A549 (cell line): ENCODE measurements at regions of chr1 and their contacts with region 1.

Region 1: DNA sequence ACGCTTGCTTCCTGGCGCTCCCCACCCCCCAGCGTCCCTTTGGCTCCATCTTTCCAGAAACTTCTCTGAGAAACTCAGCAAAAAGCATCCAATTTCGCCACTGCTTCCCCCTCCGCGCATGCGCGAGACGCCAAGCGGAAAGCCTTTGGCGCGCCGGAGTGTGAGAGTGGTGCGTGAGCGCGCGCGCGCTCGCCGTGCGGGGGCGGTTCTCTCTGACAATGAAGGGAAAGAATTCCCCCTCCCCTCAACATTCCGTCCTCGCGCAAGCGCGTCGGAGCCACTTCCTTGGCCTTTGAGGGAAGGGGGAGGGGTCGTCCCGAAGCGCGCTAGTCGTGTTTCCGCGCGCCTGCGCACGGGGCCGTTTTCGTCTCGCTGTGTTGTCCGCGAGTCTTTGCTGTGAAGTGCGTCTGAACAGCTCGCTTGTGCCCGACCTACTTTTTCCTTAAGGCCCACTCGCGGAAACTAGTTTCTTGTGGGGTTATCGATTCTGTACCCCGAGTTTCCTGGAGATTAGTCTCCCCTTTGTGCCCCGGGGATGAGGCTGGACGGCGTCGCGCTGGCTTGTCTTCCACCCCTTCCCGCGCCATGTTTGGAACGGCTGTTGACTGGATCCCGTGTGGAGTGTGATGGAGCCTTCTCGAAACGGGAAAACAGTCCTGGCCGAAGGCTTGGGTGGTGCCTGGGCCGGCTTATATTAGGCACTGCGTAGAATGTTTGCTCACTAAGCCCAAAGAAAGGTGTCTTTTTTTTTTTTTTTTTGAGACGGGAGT is 11.6 kb upstream of the SPEN start:
- DNase-seq: peak; percentile 74 to 98
- ATAC-seq: peak; percentile 67 to 75
- H3K4me3 ChIP-seq: peak overlapping the region; percentile 77
- H3K27ac ChIP-seq: peak overlapping the region; percentile 98 to 100
- H3K4me1 ChIP-seq: peaks cover 20% of the 10 kb centered on the region
- CTCF ChIP-seq: no peak
- EP300 ChIP-seq: no peak
- POLR2A ChIP-seq: peak; percentile 69
- RAD21 ChIP-seq: no peak

Region 2: DNA sequence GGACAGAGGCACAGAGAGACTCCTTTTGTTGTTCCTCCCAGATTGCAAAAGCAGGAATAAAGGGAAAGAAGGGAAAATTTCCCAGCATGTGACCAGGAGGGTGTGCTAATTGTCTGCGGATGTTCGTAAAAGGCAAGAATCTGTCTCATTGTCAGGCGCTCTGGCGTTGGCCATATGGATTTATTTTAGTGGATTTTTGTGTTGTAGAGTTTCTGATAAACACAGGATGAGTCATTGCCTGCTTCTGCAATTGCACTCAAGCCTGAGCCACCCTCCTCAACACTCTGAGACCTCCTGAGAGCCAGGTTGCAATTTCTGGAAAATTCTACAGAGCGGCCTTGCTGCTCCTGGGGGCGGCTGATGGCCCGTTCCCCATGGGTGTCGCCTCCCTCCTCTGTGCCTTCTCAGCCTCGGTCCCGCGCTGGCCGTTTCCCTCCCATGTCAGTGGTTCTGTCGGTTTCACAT is 1009.7 kb before region 1 on chr1:
- CTCF ChIA-PET with region 1: no interaction called
- POLR2A ChIA-PET with region 1: no interaction called
- DNase-seq: no peak
- ATAC-seq: no peak
- H3K4me3 ChIP-seq: no peak overlapping the region
- H3K27ac ChIP-seq: no peak overlapping the region
- H3K4me1 ChIP-seq: no peaks in the 10 kb centered on the region
- CTCF ChIP-seq: no peak
- EP300 ChIP-seq: no peak
- POLR2A ChIP-seq: no peak
- RAD21 ChIP-seq: no peak

Region 3: GRCh38 chr1:15820478-15820877 is 15.4 kb before region 1 on chr1:
- CTCF ChIA-PET with region 1: interaction called, 17 read pairs
- POLR2A ChIA-PET with region 1: interaction called, 17 read pairs
- DNase-seq: no peak
- ATAC-seq: peak in 1 of 2 experiments; percentile 38; a peak in 1 of 6 replicates
- H3K4me3 ChIP-seq: no peak overlapping the region
- H3K27ac ChIP-seq: no peak overlapping the region
- H3K4me1 ChIP-seq: no peaks in the 10 kb centered on the region
- CTCF ChIP-seq: no peak
- EP300 ChIP-seq: no peak
- POLR2A ChIP-seq: no peak
- RAD21 ChIP-seq: no peak

Region 4: GRCh38 chr1:15847100-15847892 is 11.4 kb after region 1 on chr1 and contains the start of gene SPEN:
- CTCF ChIA-PET with region 1: interaction called, 4 read pairs
- POLR2A ChIA-PET with region 1: interaction called, 26 read pairs
- DNase-seq: peak; percentile 68 to 94
- ATAC-seq: peak; percentile 80 to 87
- H3K4me3 ChIP-seq: peak within 1 kb of the TSS; percentile 99
- H3K27ac ChIP-seq: peak within 1 kb of the TSS; percentile 98 to 100
- H3K4me1 ChIP-seq: peaks cover 32% of the 10 kb centered on the region
- CTCF ChIP-seq: no peak
- EP300 ChIP-seq: no peak
- POLR2A ChIP-seq: peak; percentile 70
- RAD21 ChIP-seq: no peak; a peak in 1 of 5 replicates
- polyA plus RNA-seq, gene SPEN: 7.0 and 14.3 TPM in 2 replicates